ENCODE measurements at regions of chr12 and their contacts with region 1.

Region 1: GRCh38 chr12:86349196-86349595 is 93.0 kb upstream of the MGAT4C start:
- DNase-seq: no peak
- H3K4me3 ChIP-seq: no peak overlapping the region
- CTCF ChIP-seq: no peak

Region 2: GRCh38 chr12:86389949-86390348 is 40.8 kb after region 1 on chr12:
- in situ Hi-C with region 1: loop called (anchors 5 kb)
- DNase-seq: peak; percentile 36
- H3K4me3 ChIP-seq: no peak overlapping the region
- CTCF ChIP-seq: no peak